Endothelial cell of umbilical vein (primary cell): ENCODE measurements at regions of chr7 and their contacts with region 1.

Region 1: GRCh38 chr7:53940483-53940882 is 601.7 kb upstream of the VSTM2A start:
- DNase-seq: no peak
- H3K4me3 ChIP-seq: no peak overlapping the region
- H3K27ac ChIP-seq: no peak overlapping the region
- H3K4me1 ChIP-seq: no peaks in the 10 kb centered on the region
- H3K27me3 ChIP-seq: no peaks in the 10 kb centered on the region
- CTCF ChIP-seq: no peak
- POLR2A ChIP-seq: no peak

Region 2: DNA sequence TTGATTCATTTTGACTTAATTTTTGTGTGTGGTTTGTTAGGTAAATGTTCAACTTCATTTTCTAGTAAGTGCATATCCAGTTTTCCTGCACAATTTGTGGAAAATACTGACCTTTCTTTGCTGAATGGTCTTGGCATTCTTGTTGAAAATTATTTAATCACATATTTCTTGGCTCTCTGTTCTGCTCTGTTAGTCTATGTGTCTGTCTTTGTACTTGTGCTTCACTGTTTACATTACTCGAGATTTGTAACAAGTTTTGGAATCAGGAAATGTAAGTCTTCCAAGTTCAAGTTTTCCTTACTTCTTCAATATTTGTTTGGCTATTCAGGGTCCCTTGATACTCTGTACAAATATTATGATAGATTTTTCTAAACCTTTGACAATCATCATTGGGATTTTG is 1743.3 kb before region 1 on chr7:
- CTCF ChIA-PET with region 1: no interaction called
- POLR2A ChIA-PET with region 1: no interaction called
- dilution Hi-C with region 1: no loop called
- intact Hi-C with region 1: loop called (anchors 5 kb)
- DNase-seq: peak; percentile 3
- H3K4me3 ChIP-seq: no peak overlapping the region
- H3K27ac ChIP-seq: no peak overlapping the region
- H3K4me1 ChIP-seq: no peaks in the 10 kb centered on the region
- H3K27me3 ChIP-seq: no peaks in the 10 kb centered on the region
- CTCF ChIP-seq: no peak
- POLR2A ChIP-seq: no peak

Region 3: GRCh38 chr7:53920011-53920410 is 20.5 kb before region 1 on chr7:
- CTCF ChIA-PET with region 1: no interaction called
- POLR2A ChIA-PET with region 1: no interaction called
- dilution Hi-C with region 1: no loop called
- intact Hi-C with region 1: no loop called
- DNase-seq: no peak
- H3K4me3 ChIP-seq: no peak overlapping the region
- H3K27ac ChIP-seq: no peak overlapping the region
- H3K4me1 ChIP-seq: no peaks in the 10 kb centered on the region
- H3K27me3 ChIP-seq: no peaks in the 10 kb centered on the region
- CTCF ChIP-seq: no peak
- POLR2A ChIP-seq: no peak